ENCODE measurements at regions of chr14 and their contacts with region 1.

Region 1: DNA sequence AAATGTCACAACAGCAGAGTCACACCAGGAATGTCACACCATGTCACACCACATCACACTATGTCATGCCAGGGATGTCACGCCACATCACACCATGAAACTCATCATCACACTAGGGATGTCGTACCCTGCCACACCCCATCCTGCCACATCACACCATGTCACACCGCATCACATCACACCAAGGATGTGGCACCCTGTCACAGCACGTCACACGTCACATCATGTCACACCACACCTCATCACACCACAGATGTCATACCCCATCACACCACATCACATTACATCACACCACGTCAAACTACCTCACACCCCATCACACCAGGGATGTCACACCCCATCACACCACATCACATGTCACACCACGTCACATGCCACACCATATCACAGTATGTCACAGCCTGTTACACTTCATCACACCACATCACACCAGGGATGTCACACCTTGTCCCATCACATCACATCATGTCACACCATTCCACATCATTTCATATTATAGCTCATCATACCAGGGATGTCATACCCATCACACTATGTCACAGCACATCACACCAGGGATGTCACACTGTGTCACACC is 90.9 kb downstream of the TMEM121 start:
- DNase-seq: peak; percentile 68
- ATAC-seq: no peak
- H3K4me3 ChIP-seq: no peak overlapping the region
- H3K4me3 Mint-ChIP-seq: no peak overlapping the region
- H3K27ac ChIP-seq: no peak overlapping the region
- H3K27ac Mint-ChIP-seq: peak overlapping the region; percentile 60
- H3K4me1 ChIP-seq: peaks cover 7 to 17% of the 10 kb centered on the region in 2 donors
- H3K4me1 Mint-ChIP-seq: peaks cover 28% of the 10 kb centered on the region
- H3K27me3 ChIP-seq: no peaks in the 10 kb centered on the region
- H3K27me3 Mint-ChIP-seq: no peaks in the 10 kb centered on the region
- CTCF ChIP-seq: no peak

Region 2: DNA sequence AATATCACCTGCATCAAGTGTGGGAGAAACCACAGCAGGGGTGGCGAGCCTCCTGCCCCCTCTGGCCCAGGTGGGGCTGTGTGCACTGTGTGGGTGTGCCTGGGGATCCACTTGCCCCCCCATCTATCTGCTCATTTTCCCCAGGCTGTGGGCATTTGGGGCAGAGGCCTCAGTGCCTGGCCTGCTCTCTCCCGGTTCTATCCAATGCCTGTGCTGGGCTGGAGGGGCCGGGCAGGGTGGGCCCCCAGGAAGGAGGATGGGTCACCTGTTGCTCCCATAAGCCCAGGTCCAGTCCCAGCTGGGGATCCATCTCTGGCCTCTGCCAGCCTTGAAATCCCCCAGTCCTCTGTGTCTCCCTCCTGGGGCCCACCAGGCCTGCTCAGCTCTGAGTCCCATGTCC is 14.7 kb after region 1 on chr14:
- CTCF ChIA-PET with region 1: no interaction called
- POLR2A ChIA-PET with region 1: no interaction called
- intact Hi-C with region 1: loop called (anchors 2 kb)
- DNase-seq: no peak
- ATAC-seq: no peak
- H3K4me3 ChIP-seq: no peak overlapping the region
- H3K4me3 Mint-ChIP-seq: no peak overlapping the region
- H3K27ac ChIP-seq: no peak overlapping the region
- H3K27ac Mint-ChIP-seq: no peak overlapping the region
- H3K4me1 ChIP-seq: peaks cover 8 to 22% of the 10 kb centered on the region in 2 donors
- H3K4me1 Mint-ChIP-seq: peaks cover 36% of the 10 kb centered on the region
- H3K27me3 ChIP-seq: no peaks in the 10 kb centered on the region
- H3K27me3 Mint-ChIP-seq: no peaks in the 10 kb centered on the region
- CTCF ChIP-seq: no peak

Measured in B cell (primary cell).